ENCODE measurements at regions of chr3 and their contacts with region 1.

Region 1: GRCh38 chr3:33372218-33373081 is 67.8 kb downstream of the UBP1 start:
- DNase-seq: no peak
- H3K4me3 ChIP-seq: no peak overlapping the region
- CTCF ChIP-seq: peak; percentile 79

Region 2: DNA sequence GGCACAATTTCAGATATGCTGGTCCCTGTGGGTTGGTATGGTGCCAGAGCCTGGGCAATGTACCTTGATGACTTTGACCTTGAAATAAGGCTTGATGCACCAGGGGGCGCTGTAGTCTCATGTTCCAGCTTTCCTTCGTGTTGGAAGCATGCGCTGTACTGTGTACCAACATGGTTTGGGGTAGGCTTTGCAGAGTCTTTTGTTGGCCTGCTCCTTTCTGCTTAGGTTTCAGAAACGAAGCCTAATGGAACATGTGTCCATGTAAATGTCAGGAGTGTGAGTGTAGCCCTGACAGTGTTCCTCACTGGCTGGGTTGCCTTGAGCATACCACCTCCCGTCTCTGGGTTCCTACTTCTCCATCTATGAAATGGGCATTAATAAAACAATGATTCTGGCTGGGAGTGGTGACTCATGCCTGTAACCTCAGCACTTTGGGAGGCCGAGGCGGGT is 424.6 kb before region 1 on chr3:
- CTCF ChIA-PET with region 1: interaction called, 25 read pairs
- POLR2A ChIA-PET with region 1: no interaction called
- DNase-seq: peak; percentile 7
- H3K4me3 ChIP-seq: no peak overlapping the region
- CTCF ChIP-seq: peak; percentile 78

Region 3: GRCh38 chr3:33113772-33114621 is 258.5 kb before region 1 on chr3 and contains the start of gene CRTAP:
- CTCF ChIA-PET with region 1: interaction called, 21 read pairs
- POLR2A ChIA-PET with region 1: no interaction called
- DNase-seq: peak; percentile 69
- H3K4me3 ChIP-seq: peak within 1 kb of the TSS; percentile 84
- CTCF ChIP-seq: no peak

Region 4: DNA sequence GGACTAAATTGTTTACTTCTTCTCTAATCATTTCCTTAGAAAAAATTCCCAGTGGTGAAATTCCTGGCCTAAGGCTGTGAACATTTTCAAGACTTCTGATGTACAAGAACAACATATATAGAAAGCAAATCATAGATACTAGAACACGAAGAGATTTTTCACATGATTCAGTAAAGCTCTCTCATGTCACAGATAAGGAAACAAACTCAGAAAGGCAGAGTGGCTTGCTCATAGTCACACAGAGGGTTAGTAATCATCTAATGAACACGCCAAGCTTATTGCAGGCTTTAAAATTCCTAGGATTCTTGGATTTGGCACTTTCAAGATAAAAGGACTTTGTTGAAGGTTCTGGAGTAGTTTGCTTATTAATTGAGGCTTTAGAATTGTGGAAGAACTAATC is 232.5 kb before region 1 on chr3:
- CTCF ChIA-PET with region 1: interaction called, 425 read pairs
- POLR2A ChIA-PET with region 1: no interaction called
- DNase-seq: no peak
- H3K4me3 ChIP-seq: no peak overlapping the region
- CTCF ChIP-seq: no peak

Region 5: DNA sequence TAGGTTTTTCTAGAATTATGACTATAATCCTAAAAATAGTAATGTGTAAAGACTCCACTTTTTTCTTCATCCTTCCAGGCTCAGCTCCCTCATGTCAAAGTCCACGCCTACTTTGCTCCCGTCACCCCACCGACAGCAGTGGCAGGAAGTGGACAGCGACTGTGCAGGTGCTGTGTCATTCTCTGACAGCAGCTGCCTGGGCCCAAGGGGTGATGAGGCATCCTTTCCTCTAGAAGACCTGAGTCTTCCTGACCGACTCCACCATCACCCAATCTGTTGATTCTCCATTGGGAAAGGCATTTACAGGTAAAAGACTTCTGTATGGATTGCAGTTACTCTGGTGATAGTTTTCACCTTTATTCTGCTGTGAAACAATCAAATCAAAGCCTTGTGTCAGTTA is 13.0 kb after region 1 on chr3:
- CTCF ChIA-PET with region 1: interaction called, 53 read pairs
- POLR2A ChIA-PET with region 1: no interaction called
- DNase-seq: no peak
- H3K4me3 ChIP-seq: no peak overlapping the region
- CTCF ChIP-seq: no peak

Region 6: GRCh38 chr3:33440323-33441232 is 68.1 kb after region 1 on chr3 and contains the start of gene UBP1:
- CTCF ChIA-PET with region 1: interaction called, 18 read pairs
- POLR2A ChIA-PET with region 1: no interaction called
- DNase-seq: peak; percentile 100
- H3K4me3 ChIP-seq: peak within 1 kb of the TSS; percentile 88
- CTCF ChIP-seq: no peak